ENCODE measurements at regions of chr14 and their contacts with region 1.

Region 1: GRCh38 chr14:88792572-88793258 is at the start of gene EML5:
- DNase-seq: peak; percentile 71

Region 2: DNA sequence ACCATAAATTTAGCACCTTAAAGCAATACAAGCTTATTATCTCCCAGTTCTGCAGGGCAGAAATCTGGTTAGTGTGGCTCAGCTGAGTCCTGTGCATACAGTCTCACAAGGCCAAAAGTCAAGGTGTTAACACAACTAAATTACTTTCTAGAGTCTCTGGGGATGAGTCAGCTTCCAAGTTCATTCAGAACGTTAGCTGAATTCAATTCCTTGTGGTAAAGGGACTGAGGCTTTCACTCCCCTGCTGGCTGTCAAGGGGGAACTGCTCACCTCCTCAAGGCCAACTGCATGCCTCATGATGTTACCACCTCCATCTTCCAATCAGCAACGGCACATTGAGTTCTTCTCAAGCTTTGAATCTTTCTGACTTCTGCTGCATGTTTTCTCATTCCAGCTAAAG is 27.6 kb before region 1 on chr14:
- CTCF ChIA-PET with region 1: no interaction called
- POLR2A ChIA-PET with region 1: no interaction called
- DNase-seq: peak; percentile 7

Region 3: DNA sequence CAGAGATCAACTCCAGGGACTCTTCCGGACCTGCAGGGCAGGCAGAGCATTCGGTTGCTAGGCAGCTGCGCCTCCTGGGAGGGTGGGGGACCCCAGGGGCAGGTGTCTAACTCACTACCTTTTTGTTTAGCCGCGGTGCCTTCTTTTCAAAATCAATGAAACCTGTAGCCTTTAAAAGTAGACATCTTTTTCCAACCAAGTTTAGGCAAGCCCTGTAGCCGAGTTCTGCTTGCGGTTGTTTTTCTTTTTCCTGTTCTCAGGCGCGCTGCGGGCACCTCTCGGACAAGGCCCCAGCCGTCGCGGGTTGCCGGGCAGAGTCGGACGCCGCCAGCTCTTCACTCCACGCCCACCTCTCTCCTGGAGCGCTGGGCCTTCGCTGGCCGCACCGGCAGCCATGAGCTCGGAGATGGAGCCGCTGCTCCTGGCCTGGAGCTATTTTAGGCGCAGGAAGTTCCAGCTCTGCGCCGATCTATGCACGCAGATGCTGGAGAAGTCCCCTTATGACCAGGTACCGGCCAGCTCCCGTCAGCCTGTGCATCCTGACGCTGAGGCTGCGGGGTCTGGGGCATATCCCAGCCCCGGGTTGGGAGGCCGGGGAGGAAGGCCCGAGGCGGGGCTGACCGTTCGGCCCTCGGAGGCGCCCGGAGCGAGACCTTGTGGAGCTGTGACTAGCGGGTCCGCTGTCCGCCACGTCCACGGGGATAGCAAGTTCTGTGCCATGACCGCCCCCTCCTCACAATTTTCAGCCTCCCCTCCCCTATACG is 31.8 kb after region 1 on chr14 and contains the start of gene TTC8:
- CTCF ChIA-PET with region 1: no interaction called
- POLR2A ChIA-PET with region 1: interaction called, 11 read pairs
- DNase-seq: peak; percentile 91